Activated CD4-positive, alpha-beta T cell treated with anti-CD3 and anti-CD28 coated beads, Interleukin-2, amount 10 ng/mL, durations not matched to agents 24 days and 14 days (primary cell): ENCODE measurements at regions of chr9 and their contacts with region 1.

Region 1: DNA sequence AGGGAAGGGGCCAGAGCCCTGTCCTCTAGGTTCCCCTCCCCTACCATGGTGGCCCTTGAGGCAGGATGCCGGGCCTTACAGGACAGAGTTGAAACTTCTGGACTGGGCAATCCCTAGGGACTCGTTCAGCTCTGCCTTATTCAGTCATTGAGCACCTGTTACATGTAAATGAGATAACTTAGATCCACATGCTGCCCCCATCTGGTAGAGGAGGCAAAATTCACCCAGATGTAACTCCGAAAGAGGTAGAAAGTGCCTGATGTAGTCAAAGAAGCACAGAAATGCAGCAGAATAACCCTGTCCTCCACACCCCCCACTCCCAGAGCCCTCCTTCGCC is 1.5 kb downstream of the GGTA1 start:
- DNase-seq: peak; percentile 84
- H3K4me3 Mint-ChIP-seq: peak overlapping the region; percentile 67
- H3K27ac Mint-ChIP-seq: no peak overlapping the region
- H3K4me1 Mint-ChIP-seq: peaks cover 15% of the 10 kb centered on the region
- H3K27me3 Mint-ChIP-seq: peaks cover 59% of the 10 kb centered on the region

Region 2: GRCh38 chr9:121445981-121446380 is 52.1 kb before region 1 on chr9:
- intact Hi-C with region 1: loop called (anchors 1 kb)
- DNase-seq: no peak
- H3K4me3 Mint-ChIP-seq: no peak overlapping the region
- H3K27ac Mint-ChIP-seq: no peak overlapping the region
- H3K4me1 Mint-ChIP-seq: peaks cover 11% of the 10 kb centered on the region
- H3K27me3 Mint-ChIP-seq: peaks cover 53% of the 10 kb centered on the region

Region 3: DNA sequence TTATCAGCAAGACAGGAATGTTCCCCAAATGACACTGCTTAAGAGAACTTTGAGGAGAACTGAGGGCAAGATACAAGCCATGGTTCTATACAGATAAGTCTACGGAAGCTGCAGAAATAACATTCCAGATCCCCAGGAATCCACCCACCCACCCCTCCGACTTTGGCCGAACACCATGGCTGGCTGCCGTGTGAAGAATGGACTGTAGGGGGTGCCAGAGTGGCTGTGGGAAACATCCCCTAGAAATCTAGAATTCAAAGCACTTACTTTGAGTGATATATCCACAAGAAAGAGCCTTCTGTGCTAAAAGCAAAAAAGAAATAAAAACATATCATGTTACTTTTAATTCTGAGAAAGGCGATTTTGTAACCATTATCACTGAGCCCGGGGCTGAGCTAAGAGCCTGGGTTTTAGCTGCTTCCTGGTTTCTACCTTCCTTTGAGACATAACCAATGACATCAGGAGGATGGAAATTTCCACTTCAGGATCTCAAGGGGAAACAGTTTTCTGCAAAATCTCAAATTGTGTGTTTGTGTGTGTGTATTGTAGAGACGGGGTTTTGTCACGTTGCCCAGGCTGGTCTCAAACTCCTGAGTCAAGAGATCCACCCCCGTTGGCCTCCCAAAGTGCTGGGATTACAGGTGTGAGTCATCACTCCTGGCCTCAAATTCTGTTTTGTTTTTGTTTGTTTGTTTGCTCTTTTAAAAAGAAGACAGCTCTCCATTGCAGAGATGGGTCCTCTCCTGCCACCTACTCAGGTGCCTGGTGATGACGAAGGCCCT is 34.9 kb before region 1 on chr9:
- intact Hi-C with region 1: loop called (anchors 5 kb)
- DNase-seq: peak; percentile 69
- H3K4me3 Mint-ChIP-seq: no peak overlapping the region
- H3K27ac Mint-ChIP-seq: no peak overlapping the region
- H3K4me1 Mint-ChIP-seq: peaks cover 3% of the 10 kb centered on the region
- H3K27me3 Mint-ChIP-seq: peaks cover 31% of the 10 kb centered on the region

Region 4: GRCh38 chr9:121510766-121511550 is 12.8 kb after region 1 on chr9:
- intact Hi-C with region 1: no loop called
- DNase-seq: no peak
- H3K4me3 Mint-ChIP-seq: no peak overlapping the region
- H3K27ac Mint-ChIP-seq: no peak overlapping the region
- H3K4me1 Mint-ChIP-seq: no peaks in the 10 kb centered on the region
- H3K27me3 Mint-ChIP-seq: peaks cover 6% of the 10 kb centered on the region